ENCODE measurements at regions of chr1 and their contacts with region 1.

Region 1: DNA sequence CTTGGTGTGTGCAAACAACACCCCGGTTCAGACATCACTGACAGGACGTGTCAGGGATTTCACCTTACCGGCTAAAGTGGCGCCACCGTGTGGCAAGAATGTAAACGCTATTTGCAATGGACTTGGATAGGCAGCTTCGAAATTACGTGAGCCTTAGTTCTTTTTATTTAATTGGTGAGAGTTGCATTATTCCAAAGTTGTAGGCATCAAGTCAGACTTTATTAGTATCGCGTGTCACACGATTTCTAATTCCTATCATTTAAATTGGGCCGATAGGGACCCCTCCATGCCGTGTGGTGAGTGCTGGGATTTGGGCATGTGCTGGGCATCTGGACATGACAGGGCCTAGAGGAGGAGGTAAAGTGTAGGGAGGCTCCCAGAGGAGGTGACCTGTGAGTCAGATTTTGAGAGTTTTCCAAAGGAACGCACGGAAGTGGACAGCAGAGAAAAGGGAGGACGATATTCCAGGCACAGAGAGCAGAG is 14.5 kb upstream of the CPT2 start:
- DNase-seq: peak; percentile 82
- H3K4me3 ChIP-seq: no peak overlapping the region
- H3K27ac ChIP-seq: no peak overlapping the region
- H3K4me1 ChIP-seq: peaks cover 3% of the 10 kb centered on the region
- CTCF ChIP-seq: peak; percentile 97

Region 2: DNA sequence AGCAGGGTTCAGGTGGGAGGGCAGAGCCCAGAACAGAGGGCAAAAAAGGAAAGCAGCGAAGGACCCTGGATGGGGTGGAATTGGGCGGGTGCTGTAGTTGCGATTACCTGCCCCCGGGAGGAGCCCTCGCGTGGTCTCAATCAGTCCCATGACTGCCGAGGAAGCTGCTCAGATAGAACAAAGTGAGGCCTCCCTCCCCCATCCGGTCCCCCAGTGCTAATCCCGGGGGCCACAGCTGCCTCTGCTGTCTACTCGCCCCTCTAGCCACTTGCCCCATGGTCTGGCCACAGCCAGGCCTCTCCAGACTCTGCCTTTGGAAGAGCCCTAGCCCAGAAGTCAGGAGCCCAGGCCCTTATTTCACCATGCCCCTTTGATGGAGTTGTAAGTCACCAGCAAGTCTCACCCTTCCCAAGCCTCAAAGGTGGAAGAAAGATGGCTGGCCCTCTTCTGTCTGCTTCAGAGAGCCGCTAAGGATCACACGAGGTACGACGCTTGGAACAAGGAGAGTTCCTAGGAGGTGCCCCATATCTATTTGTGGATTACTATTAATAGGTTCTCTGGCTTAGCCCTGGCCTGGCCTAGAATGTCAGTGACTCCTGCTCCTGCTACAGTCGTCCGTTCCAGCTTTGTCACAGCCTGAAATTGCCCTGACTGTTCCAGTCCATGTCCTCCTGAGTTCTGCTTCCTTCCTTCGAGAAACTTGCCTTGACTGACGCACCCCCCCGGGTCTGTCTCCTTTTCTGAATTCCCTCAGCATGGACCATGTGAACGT is 277.0 kb before region 1 on chr1:
- CTCF ChIA-PET with region 1: no interaction called
- POLR2A ChIA-PET with region 1: no interaction called
- intact Hi-C with region 1: loop called (anchors 1 kb)
- DNase-seq: peak; percentile 58
- H3K4me3 ChIP-seq: no peak overlapping the region
- H3K27ac ChIP-seq: no peak overlapping the region
- H3K4me1 ChIP-seq: peaks cover 3% of the 10 kb centered on the region
- CTCF ChIP-seq: peak; percentile 77

Region 3: DNA sequence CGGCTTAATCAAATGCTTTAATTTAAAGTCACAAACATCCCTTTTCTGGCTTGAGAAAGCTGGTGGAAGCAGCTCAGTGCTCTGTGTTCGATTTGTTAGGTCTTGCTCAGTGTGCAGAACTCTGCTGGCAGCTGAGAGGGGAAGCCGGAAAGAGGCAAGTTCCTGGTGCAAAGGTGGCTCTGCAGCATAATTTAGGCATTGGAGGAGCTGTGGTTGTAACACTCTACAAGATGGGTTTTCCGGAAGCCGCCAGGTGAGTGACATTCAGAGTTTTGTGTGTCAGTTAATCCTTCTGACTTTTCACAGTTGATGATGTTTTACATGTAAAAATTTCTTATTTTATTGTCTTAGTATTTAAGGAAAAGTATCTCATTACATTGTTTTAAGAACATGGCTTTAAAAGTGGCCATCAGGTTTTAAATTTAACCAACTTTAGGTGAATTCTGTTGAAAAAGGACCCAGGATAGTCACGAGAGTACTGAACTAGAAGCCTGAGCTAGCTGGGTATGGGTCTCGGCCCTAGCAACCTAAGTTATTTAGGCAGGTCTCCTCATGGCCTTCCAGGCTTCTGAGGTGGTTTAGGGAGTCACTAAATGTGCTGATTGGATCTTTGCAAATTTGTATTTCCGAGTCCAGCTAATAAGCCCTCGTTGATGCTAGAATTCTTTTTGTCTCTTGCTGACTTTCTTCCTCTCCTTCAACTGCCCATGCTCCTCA is 167.2 kb before region 1 on chr1:
- CTCF ChIA-PET with region 1: no interaction called
- POLR2A ChIA-PET with region 1: interaction called, 3 read pairs
- intact Hi-C with region 1: loop called (anchors 5 kb)
- DNase-seq: peak; percentile 95
- H3K4me3 ChIP-seq: peak overlapping the region; percentile 80
- H3K27ac ChIP-seq: peak overlapping the region; percentile 35
- H3K4me1 ChIP-seq: peaks cover 18% of the 10 kb centered on the region
- CTCF ChIP-seq: no peak

Measured in OCI-LY7 (cell line).